ENCODE measurements at regions of chr2 and their contacts with region 1.

Region 1: DNA sequence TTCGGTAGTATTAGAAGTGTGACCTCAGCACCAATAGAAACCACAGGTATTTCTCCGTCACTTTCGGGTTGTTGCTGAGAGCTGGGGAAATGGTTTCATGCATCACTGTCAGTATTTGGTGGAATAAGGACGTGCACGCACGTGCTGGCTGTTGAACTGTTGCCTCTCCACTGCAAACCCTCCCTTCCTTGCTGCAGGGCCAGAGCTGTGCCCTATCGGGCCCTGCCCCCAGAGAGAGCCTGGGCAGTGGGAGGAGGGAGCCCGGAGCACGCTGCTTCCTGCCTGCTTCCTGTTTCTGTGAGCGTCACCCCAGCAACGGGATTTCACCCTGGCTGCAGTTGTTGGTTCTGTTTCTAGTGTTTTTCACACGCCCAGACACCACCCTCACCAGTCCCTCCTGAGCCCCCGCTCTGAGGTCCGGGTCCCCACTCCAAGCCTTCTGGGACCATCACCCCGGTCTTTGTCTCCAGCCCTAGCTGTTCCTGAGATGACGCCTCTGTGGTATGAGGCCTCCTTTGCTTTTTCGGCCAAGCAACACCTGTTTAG is 47.4 kb downstream of the LRRFIP1 start:
- DNase-seq: peak; percentile 95
- H3K4me3 Mint-ChIP-seq: peak overlapping the region; percentile 83
- H3K27ac Mint-ChIP-seq: peak overlapping the region; percentile 90
- H3K4me1 Mint-ChIP-seq: peaks cover 40% of the 10 kb centered on the region
- H3K27me3 Mint-ChIP-seq: peaks cover 7% of the 10 kb centered on the region

Region 2: GRCh38 chr2:237434866-237435311 is 239.9 kb before region 1 on chr2:
- intact Hi-C with region 1: loop called (anchors 5 kb)
- DNase-seq: peak; percentile 92
- H3K4me3 Mint-ChIP-seq: peak overlapping the region; percentile 89
- H3K27ac Mint-ChIP-seq: peak overlapping the region; percentile 95
- H3K4me1 Mint-ChIP-seq: peaks cover 79% of the 10 kb centered on the region
- H3K27me3 Mint-ChIP-seq: no peaks in the 10 kb centered on the region

Region 3: DNA sequence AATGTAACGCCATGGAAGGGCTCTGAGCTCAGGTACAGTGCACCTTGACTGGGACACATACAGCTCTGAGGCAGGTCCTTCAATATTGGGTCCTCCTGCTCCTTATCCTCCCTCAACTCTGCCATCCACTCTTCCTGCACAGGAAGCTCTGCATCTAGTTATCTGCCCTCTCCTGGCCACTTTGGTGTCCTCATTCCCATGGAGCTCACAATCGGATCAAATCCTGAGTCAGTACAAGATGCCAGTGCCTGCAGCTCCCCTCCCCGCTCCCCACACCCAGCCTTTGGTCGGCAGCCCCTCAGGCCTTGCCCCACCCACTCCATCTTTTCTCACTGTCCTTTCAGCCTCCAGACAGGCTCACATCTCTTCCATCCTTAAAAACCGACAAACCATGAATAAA is 10.6 kb after region 1 on chr2:
- intact Hi-C with region 1: loop called (anchors 1 kb)
- DNase-seq: no peak
- H3K4me3 Mint-ChIP-seq: no peak overlapping the region
- H3K27ac Mint-ChIP-seq: no peak overlapping the region
- H3K4me1 Mint-ChIP-seq: peaks cover 40% of the 10 kb centered on the region
- H3K27me3 Mint-ChIP-seq: no peaks in the 10 kb centered on the region

Region 4: GRCh38 chr2:237691908-237692600 is 17.2 kb after region 1 on chr2:
- intact Hi-C with region 1: loop called (anchors 1 kb)
- DNase-seq: peak; percentile 98
- H3K4me3 Mint-ChIP-seq: peak overlapping the region; percentile 99
- H3K27ac Mint-ChIP-seq: peak overlapping the region; percentile 99
- H3K4me1 Mint-ChIP-seq: peaks cover 61% of the 10 kb centered on the region
- H3K27me3 Mint-ChIP-seq: no peaks in the 10 kb centered on the region

Region 5: DNA sequence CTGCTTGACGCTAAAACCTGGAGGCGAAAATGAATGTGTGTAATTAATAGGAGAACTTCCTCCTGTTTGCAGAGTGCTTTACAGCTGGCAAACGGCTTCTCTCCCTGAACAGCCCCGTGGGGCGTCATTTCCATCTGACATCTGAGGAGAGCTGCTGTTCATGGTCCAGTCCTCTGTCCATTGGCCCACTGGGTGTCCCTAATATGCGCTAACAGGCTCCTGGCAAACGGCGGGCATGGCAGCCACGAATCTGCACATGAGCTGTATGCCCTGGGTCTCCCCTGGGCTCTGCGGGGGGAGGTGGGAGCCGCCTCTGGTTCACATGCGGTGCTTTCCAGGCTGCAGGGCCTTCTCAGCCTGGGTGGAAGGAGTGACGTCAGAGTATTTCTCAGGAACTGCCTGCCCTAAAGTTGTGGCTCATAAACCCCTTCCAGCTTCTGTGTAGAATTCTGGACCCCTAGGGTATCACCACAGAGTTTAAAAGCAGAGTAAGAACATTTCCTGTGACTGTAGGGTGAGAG is 25.8 kb after region 1 on chr2:
- intact Hi-C with region 1: loop called (anchors 1 kb)
- DNase-seq: peak; percentile 93
- H3K4me3 Mint-ChIP-seq: peak overlapping the region; percentile 87
- H3K27ac Mint-ChIP-seq: peak overlapping the region; percentile 99
- H3K4me1 Mint-ChIP-seq: peaks cover 84% of the 10 kb centered on the region
- H3K27me3 Mint-ChIP-seq: no peaks in the 10 kb centered on the region

Region 6: DNA sequence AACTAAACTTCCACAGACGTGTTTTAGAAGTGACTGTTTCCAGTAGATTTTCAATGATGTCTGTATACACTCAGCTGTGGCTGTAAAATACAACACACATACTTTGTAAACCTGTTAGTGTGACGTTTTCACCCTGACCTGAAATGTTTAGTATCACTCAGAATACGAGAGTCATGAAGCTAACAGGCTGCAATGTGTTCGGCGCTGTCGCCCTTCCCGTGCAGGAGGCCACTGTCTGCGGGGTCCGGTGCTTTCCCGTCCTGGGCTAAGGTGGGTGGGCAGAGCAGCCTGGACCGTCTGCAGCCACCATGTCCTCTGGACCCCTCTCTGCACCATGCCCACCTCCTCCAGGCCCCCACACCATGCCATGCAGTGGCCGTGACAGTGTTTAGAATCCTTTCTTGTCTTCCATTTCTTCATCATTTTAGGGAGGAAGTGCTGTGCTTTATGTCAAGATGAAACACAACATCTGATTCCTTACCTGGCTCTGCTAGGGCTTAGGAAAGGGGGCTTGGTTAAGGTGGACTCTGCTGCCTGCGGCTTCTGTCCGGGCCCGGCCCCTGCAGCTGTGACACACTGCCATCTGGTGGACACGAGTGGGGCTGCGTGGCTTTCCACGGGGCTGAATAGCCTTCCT is 69.9 kb after region 1 on chr2:
- intact Hi-C with region 1: loop called (anchors 1 kb)
- DNase-seq: peak; percentile 94
- H3K4me3 Mint-ChIP-seq: no peak overlapping the region
- H3K27ac Mint-ChIP-seq: peak overlapping the region; percentile 80
- H3K4me1 Mint-ChIP-seq: peaks cover 29% of the 10 kb centered on the region
- H3K27me3 Mint-ChIP-seq: no peaks in the 10 kb centered on the region